A549 (cell line): ENCODE measurements at regions of chr2 and their contacts with region 1.

Region 1: DNA sequence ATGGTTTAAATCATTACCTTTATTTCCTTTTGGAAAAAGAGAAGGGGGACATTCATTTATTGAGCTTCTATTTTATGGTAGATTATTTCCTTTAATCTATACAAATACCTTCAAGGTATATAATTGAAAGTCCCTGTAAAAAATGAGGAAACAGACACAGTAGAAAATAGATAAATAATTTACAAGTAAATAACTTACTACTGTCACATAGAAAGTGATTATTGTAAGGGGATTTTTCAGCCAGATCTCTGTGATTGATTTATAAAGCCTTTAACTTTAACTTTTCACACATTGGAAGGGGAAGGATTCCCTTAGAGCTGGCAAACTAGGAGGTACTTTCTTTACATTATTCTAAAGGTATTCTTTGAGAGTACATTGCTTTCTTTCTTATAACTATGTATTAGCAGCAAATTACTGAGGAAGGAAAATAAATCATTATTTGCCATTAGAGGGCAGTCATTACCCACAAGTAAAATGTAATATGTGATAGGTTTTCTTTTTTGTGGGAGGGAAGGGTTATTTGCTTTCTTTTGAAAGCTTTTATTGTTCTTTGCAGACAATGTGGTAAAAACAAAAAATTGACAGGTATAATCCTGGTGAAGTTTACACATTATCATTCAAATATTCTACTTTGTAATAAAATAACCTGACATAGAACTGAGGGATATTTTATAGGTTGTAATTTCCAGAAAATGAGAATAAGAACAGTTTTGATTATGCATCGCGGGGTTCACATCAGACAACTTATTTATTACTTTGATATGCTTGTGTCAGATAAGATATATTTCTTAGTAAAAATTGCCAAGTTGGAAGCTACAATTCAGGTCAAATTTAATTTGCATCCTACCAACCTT is 24.8 kb upstream of the RPE start:
- DNase-seq: peak; percentile 15 to 44
- ATAC-seq: peak in 1 of 2 experiments; percentile 68; a peak in 2 of 6 replicates
- H3K4me3 ChIP-seq: no peak overlapping the region
- H3K27ac ChIP-seq: no peak overlapping the region
- H3K4me1 ChIP-seq: no peaks in the 10 kb centered on the region
- CTCF ChIP-seq: peak; percentile 72
- EP300 ChIP-seq: no peak
- POLR2A ChIP-seq: no peak
- RAD21 ChIP-seq: peak; percentile 78 to 84

Region 2: DNA sequence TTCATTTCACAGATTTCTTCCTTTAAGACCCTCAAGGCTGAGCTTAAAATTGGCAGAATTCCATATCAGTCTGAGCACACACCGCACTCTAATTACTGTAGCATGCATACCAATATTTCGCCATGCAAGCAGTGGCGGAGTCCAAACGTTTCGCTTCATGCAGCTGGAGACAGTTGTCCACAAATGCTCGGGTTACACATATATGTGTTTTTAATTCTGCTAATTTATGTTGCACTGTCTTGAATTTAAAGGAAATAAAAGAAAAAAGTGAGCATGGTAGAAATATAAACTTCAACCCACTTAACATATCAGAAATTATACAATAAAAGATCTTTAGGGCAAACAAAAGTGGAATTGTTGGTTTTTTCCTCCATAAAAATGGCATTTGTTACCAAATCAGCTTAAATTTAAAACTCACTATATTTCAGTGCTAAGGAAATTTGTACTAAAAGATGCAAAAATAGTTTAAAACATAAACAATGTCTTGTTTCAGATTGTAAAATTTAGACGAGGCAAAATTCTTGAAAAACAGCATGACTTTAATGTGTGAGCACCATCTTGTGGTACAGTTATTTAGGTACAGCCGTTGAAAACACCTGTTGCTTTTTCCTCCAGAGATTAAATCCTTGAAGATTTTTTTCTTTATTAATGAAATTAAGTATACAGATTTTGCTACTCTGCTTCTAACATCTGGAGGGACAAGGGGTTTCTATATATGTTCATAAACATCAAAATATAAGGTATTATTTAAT is 217.7 kb after region 1 on chr2:
- CTCF ChIA-PET with region 1: interaction called, 26 read pairs
- POLR2A ChIA-PET with region 1: no interaction called
- DNase-seq: peak in 1 of 2 experiments; percentile 57
- ATAC-seq: peak in 1 of 2 experiments; percentile 70; a peak in 2 of 6 replicates
- H3K4me3 ChIP-seq: peak overlapping the region; percentile 10; the same call in 1 of the 3 replicates
- H3K27ac ChIP-seq: no peak overlapping the region
- H3K4me1 ChIP-seq: peaks cover 1% of the 10 kb centered on the region; the same call in 1 of the 3 replicates
- CTCF ChIP-seq: peak; percentile 88
- EP300 ChIP-seq: no peak
- POLR2A ChIP-seq: no peak
- RAD21 ChIP-seq: peak; percentile 82 to 88